BJ (cell line): ENCODE measurements at regions of chr2 and their contacts with region 1.

Region 1: DNA sequence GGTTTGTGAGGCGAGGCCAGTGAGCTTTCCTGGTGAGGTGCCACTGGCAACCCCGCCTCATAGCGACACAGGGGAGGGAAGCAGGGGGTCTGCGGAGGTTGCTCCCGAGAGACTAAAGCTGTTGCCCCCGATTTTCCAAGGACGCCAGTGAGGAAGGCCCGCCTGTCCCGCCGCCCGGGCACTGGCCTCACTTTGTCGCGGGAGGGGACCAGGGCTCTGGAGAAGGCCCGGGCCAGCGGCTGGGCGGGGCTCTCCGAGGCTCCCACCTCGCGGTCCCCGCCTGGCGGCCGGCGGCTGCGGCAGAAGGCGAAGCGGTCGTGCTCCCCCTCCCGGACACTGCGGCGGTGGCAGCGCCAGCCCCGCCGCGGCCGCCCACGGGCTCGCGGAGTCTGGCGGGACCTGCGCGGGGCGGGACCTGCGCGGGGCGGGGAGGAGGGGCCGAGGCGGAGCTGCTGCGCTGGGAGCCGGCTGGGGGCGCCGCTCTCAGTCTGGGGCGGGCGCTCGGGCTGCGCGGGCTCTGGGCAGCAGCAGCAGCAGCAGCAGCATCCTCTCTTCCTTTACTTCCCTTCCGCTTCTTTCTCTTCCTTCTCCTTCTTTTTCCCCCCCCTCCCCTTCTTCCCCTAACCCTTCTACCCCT is at the start of gene MAP2:
- DNase-seq: peak; percentile 23
- H3K4me3 ChIP-seq: peak within 1 kb of the TSS; percentile 74
- H3K27me3 ChIP-seq: no peaks in the 10 kb centered on the region; the same call in 1 of the 2 replicates
- CTCF ChIP-seq: peak; percentile 49
- polyA plus RNA-seq, gene MAP2: 3.5 and 3.7 TPM in 2 replicates

Region 2: DNA sequence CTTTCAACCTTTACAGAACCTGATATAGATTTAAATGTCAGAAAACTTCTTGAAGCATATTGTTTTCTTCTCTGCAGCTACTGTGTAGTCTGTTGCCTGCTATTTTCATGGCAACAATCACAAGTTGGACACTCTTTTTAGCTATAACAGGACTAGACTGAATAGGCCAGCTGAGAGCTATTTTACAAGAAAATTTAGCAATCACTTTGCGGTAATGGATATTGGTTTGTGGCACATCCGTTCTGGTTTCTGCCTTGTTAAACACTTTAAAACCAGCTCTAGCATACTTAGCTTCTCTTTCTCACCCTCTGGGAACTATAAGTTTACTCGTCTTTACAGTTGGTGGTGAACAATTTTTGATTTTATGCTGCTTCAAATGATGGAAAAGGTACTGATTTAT is 125.9 kb after region 1 on chr2:
- CTCF ChIA-PET with region 1: interaction called, 56 read pairs
- POLR2A ChIA-PET with region 1: no interaction called
- DNase-seq: no peak
- H3K4me3 ChIP-seq: no peak overlapping the region
- H3K27me3 ChIP-seq: no peaks in the 10 kb centered on the region
- CTCF ChIP-seq: no peak

Region 3: GRCh38 chr2:209556354-209556961 is 132.8 kb after region 1 on chr2:
- CTCF ChIA-PET with region 1: interaction called, 56 read pairs
- POLR2A ChIA-PET with region 1: interaction called, 3 read pairs
- DNase-seq: no peak
- H3K4me3 ChIP-seq: no peak overlapping the region
- H3K27me3 ChIP-seq: no peaks in the 10 kb centered on the region
- CTCF ChIP-seq: peak; percentile 67

Region 4: GRCh38 chr2:209564816-209565215 is 141.1 kb after region 1 on chr2:
- CTCF ChIA-PET with region 1: interaction called, 16 read pairs
- POLR2A ChIA-PET with region 1: no interaction called
- DNase-seq: no peak
- H3K4me3 ChIP-seq: no peak overlapping the region
- H3K27me3 ChIP-seq: no peaks in the 10 kb centered on the region
- CTCF ChIP-seq: no peak

Region 5: DNA sequence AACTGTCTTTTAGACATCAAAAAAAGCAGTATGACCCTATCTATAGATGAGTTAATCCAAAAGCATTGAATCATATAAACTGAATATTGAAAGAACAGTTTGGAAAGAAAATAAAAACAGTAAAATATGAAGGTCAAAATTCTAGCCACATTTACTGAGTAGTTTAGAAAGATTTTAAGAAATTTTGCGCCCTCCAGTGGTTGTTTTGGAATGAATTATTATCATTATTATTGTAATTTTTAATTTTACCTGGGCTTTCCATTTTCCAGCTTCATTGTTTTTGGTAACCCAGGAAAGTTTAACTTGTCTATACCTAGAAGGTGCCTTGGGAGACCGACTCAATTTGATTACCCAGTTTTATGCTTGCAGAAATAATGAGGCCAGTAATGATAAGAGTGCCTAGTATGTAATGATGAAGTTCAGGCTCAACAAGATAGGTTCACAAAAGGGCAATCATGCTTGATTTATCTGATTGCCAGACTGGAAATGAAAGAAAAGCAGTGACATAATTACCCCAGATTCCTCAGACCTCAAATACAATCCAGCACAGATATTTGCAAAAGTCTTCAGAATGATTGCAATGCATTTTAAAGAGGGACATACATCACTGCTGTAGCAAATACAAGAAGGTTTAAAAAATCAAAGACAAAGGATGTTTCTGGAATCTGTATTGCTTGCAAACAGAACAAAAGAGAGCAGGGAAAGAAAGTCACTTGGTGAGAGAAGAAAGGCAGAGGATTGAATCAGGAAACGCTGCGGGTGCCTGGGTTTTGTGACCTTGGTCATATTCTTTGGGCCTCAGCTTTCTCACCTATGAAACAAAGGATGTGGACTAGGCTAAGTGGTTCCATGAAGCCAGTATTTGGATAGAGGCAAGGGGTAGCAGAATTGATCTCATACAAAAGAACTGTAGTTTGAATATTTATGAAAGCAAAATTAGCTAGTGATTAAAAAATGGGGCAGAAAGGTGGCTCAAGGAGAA is 154.0 kb after region 1 on chr2:
- CTCF ChIA-PET with region 1: interaction called, 30 read pairs
- POLR2A ChIA-PET with region 1: no interaction called
- DNase-seq: no peak
- H3K4me3 ChIP-seq: no peak overlapping the region
- H3K27me3 ChIP-seq: no peaks in the 10 kb centered on the region
- CTCF ChIP-seq: peak; percentile 22

Region 6: DNA sequence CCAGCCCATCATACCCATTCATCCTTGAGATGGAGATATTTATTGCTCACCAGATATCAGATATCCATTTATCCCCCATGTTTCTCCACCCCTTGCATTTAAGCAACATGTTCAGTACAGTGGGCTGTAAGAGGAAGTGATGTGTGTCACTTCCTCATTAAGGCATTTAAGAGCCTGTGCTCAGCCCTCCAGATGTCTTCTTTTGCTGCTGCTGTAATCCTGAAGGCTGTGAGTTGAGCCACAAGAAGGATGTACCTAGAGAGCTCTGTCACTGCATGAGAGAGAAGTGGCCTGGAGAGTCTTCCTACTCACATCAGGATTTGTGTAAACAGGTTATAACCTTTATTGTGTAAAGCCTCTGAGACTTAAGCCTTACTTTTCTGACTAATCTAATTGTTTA is 196.1 kb after region 1 on chr2:
- CTCF ChIA-PET with region 1: no interaction called
- POLR2A ChIA-PET with region 1: no interaction called
- DNase-seq: no peak
- H3K4me3 ChIP-seq: no peak overlapping the region
- H3K27me3 ChIP-seq: no peaks in the 10 kb centered on the region
- CTCF ChIP-seq: no peak